Lower leg skin (tissue), 4 donors: ENCODE measurements at regions of chr17 and their contacts with region 1.

Region 1: DNA sequence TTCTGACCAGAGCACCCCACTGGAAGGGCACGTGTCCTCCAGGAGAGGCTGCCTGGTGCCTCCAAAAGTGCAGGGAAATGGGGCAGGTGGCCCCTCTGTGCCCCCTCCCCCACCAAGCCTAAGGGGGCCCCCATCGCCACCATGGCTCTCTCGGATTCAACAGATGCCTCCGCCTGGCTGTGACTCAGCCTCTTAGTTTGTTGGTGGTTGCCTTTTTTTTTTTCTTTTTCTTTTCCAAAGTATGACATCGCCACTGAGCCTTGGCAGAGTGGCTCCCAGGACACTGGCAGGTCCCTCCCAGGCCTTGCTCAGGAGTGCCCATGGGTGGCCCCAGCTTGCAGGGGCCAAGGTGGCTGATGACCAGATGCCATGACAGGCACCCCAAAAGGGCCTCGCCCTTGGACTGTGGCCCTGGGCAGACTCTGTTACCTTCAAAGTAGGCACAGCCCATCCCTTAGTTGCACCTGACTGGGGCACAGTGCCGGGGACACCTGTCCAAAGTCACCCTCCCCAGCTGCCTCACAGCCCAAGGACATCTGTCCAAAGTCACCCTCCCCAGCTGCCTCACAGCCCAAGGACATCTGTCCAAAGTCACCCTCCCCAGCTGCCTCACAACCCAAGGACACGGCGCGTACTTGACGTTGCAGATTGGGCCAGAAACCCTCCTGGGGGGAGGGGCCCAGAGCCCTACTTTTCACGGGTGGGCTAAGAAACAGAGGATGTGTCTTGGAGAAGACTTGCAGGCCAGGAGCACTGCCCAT is 29.6 kb downstream of the NPTX1 start:
- DNase-seq: no peak
- H3K4me3 ChIP-seq: no peak overlapping the region
- CTCF ChIP-seq: no peak
- POLR2A ChIP-seq: no peak

Region 2: DNA sequence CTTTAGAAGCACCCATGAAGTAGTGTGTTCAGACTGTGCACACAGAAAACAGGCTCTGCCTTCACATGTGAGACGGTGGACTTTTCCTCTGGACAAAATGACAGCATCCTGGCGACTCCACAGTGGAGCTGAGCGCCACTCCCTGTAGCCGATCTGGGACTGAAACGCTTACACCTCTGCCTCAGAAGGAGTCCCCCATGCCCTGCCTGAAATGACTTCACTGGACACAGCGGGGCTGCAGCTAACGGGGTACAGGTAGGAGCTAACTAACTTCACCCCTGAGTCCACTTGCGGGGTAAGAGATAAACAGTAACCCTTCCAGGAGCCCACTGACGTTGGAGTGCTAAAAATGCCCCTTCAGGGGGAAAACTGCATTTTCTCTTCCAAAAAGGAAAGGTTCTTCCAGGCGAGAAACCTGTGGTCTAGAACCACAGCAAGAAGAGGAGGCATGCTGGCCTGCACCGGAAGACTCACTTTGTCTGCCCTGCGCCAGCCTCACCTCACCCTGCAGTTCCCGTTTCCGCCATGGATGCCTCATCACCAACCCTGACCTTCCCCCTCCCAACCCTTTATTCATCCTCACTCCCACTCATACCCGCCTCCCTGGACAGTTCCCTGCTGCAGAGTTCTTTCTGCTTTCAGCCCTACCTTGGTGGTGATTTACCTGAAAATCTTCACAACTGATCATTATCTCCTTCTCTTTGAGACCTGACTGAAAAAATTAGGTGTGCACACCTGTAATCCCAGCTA is 51.2 kb before region 1 on chr17:
- intact Hi-C with region 1: loop called (anchors 2 kb)
- DNase-seq: no peak
- H3K4me3 ChIP-seq: no peak overlapping the region
- CTCF ChIP-seq: no peak
- POLR2A ChIP-seq: no peak

Region 3: DNA sequence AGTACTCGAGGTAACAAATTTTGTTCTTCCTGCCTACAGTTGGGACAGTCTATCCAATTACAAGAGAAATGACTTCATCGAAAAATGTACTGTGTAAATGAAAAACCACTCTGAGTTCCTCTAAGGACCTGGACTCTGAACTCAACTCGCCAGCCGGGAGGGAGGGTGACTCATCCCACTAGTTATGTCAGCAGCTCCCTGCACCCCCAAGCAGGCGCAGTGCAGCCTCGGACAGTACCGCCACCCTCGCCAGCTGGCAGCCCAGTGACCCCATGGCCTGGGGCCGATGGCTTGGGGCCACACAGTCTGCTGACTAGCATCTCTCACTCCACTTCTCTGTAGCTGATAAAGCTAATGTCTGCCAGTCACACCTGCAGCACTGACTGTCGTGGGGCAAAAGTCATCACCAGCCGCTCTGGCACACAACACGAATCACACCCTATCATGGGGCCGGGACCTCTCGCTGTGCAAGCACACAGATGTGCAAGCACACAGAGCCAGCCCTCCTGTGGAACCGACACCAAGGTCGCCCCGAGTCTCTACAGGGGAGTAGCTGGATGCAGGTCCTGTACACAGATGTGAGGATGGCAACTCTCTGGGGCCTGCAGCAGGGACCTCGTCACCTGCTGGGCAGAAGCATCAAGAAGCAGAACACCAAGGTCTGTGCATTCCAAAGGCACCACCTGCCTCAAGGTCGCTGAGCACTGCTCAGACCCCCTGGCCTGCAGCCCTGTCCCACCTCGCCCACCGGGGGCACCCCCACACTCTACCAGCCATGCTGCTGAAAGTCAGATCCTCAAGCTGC is 1821.0 kb after region 1 on chr17:
- intact Hi-C with region 1: loop called (anchors 5 kb)
- DNase-seq: peak; percentile 90 to 98
- H3K4me3 ChIP-seq: no peak overlapping the region
- CTCF ChIP-seq: no peak
- POLR2A ChIP-seq: no peak